ENCODE measurements at regions of chr12 and their contacts with region 1.

Region 1: GRCh38 chr12:49866859-49867579 is 24.1 kb upstream of the BCDIN3D start:
- DNase-seq: peak; percentile 54 to 96
- H3K4me3 ChIP-seq: no peak overlapping the region
- H3K27ac ChIP-seq: no peak overlapping the region
- H3K4me1 ChIP-seq: peaks cover 0 to 3% (median 1%) of the 10 kb centered on the region in 4 experiments; a peak in 3 of 7 replicates
- H3K27me3 ChIP-seq: peaks cover 0 to 2% (median 0%) of the 10 kb centered on the region in 4 experiments; a peak in 1 of 7 replicates
- CTCF ChIP-seq: peak; percentile 90 to 98 (median 93)
- EP300 ChIP-seq: no peak
- POLR2A ChIP-seq: no peak
- RAD21 ChIP-seq: peak; percentile 94 to 95

Region 2: GRCh38 chr12:49855005-49855404 is 12.0 kb before region 1 on chr12:
- CTCF ChIA-PET with region 1: interaction called, 18 read pairs
- POLR2A ChIA-PET with region 1: interaction called, 3 read pairs
- DNase-seq: no peak
- H3K4me3 ChIP-seq: no peak overlapping the region
- H3K27ac ChIP-seq: no peak overlapping the region
- H3K4me1 ChIP-seq: no peaks in the 10 kb centered on the region
- H3K27me3 ChIP-seq: no peaks in the 10 kb centered on the region
- CTCF ChIP-seq: no peak
- EP300 ChIP-seq: no peak
- POLR2A ChIP-seq: no peak
- RAD21 ChIP-seq: no peak

Region 3: DNA sequence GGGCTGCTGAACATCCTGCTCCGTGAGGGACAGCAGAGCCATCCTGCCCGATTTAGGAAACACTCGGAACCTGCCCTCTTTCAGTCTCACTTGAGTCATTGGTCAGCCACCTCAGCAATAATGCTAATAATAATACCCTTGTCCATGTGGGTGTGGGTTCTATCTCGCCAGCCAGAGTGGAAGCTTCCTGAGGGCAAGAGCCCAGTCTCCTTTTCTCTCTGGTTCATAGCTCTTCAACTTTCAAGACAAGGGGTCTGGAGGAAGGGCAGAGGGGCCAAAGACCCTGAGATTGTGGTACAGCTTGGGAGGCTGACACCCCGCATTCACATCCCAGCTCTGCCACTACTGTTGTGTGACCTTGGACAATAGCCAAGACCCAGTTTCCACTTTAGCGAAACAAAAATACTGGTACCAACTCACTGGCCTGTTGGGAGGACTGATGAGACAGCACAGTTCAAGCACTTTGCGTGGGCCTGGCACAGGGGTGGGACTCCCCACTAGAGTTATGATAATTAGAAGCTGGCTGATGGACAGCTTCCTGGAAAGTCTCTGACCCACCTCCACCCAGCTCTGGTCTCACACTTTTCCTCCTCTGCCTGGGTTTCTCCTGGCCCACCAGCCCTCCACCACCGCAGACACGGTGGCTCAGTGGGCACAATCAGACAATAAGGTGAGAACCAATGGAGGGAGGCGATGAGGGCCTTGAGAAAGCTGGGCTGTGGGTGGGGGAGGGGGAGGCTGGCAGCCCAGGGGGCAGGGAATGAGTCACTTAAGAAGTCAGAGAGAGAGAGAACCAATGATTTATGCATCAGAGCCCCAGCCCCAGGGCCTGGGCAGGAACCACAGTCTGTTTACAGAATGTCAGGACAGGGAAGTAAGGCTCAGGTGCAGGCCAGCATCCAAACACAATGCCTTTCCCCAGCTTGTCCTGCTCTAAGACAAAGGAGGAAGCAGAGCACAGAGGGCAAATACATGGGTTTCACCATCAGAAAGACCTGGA is 27.0 kb after region 1 on chr12:
- CTCF ChIA-PET with region 1: interaction called, 107 read pairs
- POLR2A ChIA-PET with region 1: no interaction called
- DNase-seq: no peak
- H3K4me3 ChIP-seq: no peak overlapping the region
- H3K27ac ChIP-seq: no peak overlapping the region
- H3K4me1 ChIP-seq: peaks cover 0 to 10% (median 6%) of the 10 kb centered on the region in 4 experiments; a peak in 5 of 7 replicates
- H3K27me3 ChIP-seq: peaks cover 0 to 11% (median 2%) of the 10 kb centered on the region in 4 experiments; a peak in 5 of 7 replicates
- CTCF ChIP-seq: no peak
- EP300 ChIP-seq: no peak
- POLR2A ChIP-seq: no peak
- RAD21 ChIP-seq: no peak

Region 4: DNA sequence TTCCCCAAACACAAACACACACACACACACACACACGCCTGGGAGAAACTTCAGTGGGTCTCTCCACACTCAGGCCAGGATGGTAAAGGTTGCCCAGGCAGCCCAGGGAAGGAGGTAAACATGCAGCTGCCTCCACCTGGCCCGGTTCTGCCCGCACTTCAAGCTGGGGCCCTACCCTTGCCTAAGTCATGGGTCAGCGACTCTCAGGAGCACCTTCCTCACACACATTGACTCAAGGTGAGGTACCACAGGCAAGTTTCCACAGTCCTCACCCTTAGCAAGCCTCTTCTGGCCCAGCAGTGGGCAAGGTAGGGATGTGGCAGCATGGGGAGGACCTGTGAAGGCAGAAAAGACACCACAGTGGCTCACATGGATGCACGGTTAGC is 50.8 kb after region 1 on chr12:
- CTCF ChIA-PET with region 1: interaction called, 16 read pairs
- POLR2A ChIA-PET with region 1: no interaction called
- DNase-seq: no peak
- H3K4me3 ChIP-seq: no peak overlapping the region
- H3K27ac ChIP-seq: no peak overlapping the region
- H3K4me1 ChIP-seq: peaks cover 0 to 3% (median 3%) of the 10 kb centered on the region in 4 experiments; a peak in 2 of 7 replicates
- H3K27me3 ChIP-seq: no peaks in the 10 kb centered on the region; a peak in 1 of 7 replicates
- CTCF ChIP-seq: no peak
- EP300 ChIP-seq: no peak
- POLR2A ChIP-seq: no peak
- RAD21 ChIP-seq: no peak

Region 5: GRCh38 chr12:49950273-49951251 is 83.5 kb after region 1 on chr12 and contains the start of gene AQP2:
- CTCF ChIA-PET with region 1: interaction called, 56 read pairs
- POLR2A ChIA-PET with region 1: no interaction called
- DNase-seq: no peak
- H3K4me3 ChIP-seq: no peak within 1 kb of the TSS
- H3K27ac ChIP-seq: no peak within 1 kb of the TSS
- H3K4me1 ChIP-seq: peaks cover 1 to 7% (median 4%) of the 10 kb centered on the region in 4 experiments; a peak in 6 of 7 replicates
- H3K27me3 ChIP-seq: peaks cover 0 to 13% (median 8%) of the 10 kb centered on the region in 4 experiments; a peak in 6 of 7 replicates
- CTCF ChIP-seq: no peak
- EP300 ChIP-seq: no peak
- POLR2A ChIP-seq: no peak
- RAD21 ChIP-seq: no peak
- total RNA-seq, gene AQP2: not detected in 2 replicates

Region 6: DNA sequence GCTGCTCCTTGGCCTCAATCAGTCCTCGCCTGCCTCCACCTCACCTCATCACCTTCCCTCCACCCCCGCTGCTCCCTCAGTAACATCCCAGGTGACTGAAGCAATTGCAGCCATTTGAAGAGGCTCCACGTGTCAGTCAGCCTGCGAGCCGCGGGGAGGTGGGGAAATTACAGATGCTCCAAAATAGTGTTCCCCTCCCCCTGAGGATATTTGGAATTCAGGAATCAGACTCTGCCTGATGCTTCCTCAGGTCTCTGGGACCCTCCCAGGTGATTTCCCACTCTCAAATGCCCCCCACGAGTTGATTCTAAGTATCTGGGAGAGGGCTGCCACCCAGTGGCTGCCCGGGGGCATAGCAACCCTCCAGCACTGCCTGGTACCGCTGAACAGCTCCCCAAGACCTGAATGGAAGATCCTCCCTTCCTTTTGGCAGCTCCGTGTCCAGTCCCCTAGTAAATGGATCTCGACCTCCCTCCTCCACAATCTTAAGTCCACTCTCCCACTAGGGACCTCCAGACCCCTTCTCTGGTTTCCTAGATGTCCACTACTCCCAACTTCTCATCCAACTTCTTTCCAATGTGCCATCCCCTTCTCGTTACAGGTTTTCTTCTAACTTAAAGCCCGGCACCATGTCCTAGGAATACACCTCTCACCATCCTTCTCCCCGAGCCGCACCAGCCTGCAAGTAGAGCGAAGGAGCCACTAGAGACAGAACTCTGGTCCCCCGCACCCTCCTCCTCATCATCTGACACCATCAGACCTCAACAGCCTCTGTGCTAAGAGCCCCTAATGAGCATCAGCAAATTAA is 189.0 kb after region 1 on chr12:
- CTCF ChIA-PET with region 1: interaction called, 13 read pairs
- POLR2A ChIA-PET with region 1: no interaction called
- DNase-seq: peak in 1 of 2 experiments; percentile 82
- H3K4me3 ChIP-seq: peak overlapping the region in 2 of 4 experiments; percentile 17 to 74; a peak in 5 of 8 replicates
- H3K27ac ChIP-seq: no peak overlapping the region
- H3K4me1 ChIP-seq: peaks cover 3 to 16% (median 10%) of the 10 kb centered on the region in 4 experiments
- H3K27me3 ChIP-seq: peaks cover 35 to 91% (median 73%) of the 10 kb centered on the region in 4 experiments
- CTCF ChIP-seq: peak; percentile 90 to 96 (median 91)
- EP300 ChIP-seq: no peak
- POLR2A ChIP-seq: no peak
- RAD21 ChIP-seq: peak; percentile 89 to 92

Measured in H1 (cell line).